Panc1 (cell line): ENCODE measurements at regions of chr16 and their contacts with region 1.

Region 1: DNA sequence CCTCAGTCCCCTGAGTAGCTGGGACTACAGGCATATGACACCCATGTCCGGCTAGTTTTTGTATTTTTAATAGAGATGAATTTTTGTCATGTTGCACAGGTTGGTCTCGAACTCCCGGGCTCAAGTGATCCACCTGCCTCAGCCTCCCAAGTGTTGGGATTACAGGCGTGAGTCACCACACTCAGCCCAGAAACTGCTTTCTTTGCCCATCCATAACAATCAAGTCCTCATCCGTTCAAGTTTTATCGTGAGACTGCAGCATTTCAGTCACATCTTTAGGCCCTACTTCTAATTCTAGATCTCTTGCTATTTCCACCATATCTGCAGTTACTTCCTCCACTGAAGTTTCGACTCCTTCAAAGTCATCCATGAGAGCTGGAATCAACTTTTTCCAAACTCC is 6.4 kb downstream of the NPRL3 start:
- DNase-seq: no peak
- ATAC-seq: no peak
- H3K4me3 ChIP-seq: no peak overlapping the region
- H3K27ac ChIP-seq: no peak overlapping the region
- H3K4me1 ChIP-seq: peaks cover 7% of the 10 kb centered on the region; the same call in 1 of the 2 replicates
- H3K27me3 ChIP-seq: no peaks in the 10 kb centered on the region
- CTCF ChIP-seq: no peak

Region 2: DNA sequence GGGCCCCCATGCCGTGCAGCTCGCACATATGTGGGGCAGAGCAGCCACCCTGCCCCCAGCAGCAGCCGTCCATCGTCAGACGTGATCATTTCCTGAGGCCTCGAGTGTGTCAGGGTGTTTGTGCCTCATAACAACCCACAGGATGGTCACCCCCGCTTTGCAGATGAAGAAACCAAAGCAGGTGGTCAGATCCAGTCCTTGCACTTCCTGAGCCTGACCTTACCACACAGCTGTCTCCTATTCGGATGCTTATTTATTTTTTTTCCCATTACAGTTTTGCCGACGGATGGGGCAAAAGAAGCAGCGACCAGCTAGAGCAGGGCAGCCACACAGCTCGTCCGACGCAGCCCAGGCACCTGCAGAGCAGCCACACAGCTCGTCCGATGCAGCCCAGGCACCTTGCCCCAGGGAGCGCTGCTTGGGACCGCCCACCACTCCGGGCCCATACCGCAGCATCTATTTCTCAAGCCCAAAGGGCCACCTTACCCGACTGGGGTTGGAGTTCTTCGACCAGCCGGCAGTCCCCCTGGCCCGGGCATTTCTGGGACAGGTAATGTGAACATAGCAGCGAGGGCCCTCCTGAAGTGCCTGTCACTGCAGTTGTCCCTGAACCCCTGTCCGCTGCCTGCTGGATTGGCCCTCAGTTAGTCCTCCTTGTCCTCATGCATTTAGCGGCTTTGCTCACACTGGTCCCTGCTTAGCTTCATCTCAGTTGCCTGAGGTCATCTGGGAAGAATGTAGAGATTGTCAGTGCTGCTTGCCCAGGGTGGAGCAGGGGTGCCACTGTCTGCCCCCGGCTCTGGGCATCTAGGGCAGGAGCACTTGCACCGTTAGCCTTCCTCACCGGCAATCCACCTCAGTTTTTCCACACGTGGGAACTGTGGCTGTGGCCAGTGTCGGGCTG is 52.7 kb before region 1 on chr16:
- CTCF ChIA-PET with region 1: no interaction called
- POLR2A ChIA-PET with region 1: interaction called, 13 read pairs
- in situ Hi-C with region 1: no loop called
- intact Hi-C with region 1: no loop called
- DNase-seq: no peak
- ATAC-seq: no peak
- H3K4me3 ChIP-seq: peak overlapping the region; percentile 81 to 84
- H3K27ac ChIP-seq: peak overlapping the region; percentile 86
- H3K4me1 ChIP-seq: peaks cover 44% of the 10 kb centered on the region
- H3K27me3 ChIP-seq: no peaks in the 10 kb centered on the region
- CTCF ChIP-seq: no peak

Region 3: GRCh38 chr16:361872-362701 is 230.0 kb after region 1 on chr16:
- CTCF ChIA-PET with region 1: interaction called, 12 read pairs
- POLR2A ChIA-PET with region 1: no interaction called
- in situ Hi-C with region 1: no loop called
- intact Hi-C with region 1: no loop called
- DNase-seq: peak; percentile 47
- ATAC-seq: peak; percentile 90
- H3K4me3 ChIP-seq: peak overlapping the region in 1 of 2 experiments; percentile 23; a peak in 2 of 4 replicates
- H3K27ac ChIP-seq: no peak overlapping the region
- H3K4me1 ChIP-seq: peaks cover 9% of the 10 kb centered on the region
- H3K27me3 ChIP-seq: no peaks in the 10 kb centered on the region
- CTCF ChIP-seq: peak; percentile 95